GM10248 (cell line): ENCODE measurements at regions of chr4 and their contacts with region 1.

Region 1: DNA sequence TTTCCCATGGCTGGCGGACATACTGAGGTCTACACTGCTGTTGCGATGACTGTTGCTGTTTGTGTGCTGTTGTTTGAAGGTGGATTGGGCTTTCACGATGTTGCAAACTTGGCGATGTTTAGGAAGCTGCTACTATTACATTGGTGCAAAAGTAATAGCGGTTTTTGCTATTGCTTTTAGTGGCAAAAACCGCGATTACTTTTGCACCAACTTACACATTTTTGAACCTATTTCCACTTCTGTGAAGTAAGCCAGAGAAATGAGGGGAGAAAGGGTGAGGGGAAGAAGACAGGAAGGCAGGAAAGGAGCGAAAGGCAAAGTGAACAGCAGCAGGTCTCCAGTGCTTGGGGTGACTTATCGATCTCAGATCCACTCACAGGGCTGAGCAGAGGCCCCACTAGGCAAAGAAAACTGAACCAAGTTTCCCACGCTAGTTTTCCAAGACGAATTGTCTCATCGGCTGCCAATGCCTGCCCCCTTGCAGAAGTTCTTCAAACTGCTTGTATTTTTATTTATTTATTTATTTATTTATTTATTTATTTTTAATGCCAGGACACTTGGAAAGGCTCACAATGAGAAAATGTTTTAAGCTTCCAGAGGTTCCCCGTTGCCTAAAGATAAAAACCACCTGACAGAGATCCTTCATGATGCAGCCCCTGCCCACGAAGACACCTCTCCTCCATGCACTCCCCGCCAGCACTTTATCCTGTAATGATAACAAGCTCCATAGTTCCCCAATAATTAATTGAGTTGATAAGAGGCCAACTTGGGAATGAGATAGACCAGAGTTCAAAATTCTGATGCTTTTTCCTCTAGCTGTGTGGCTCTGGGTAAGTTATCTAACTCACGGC is 43.3 kb downstream of the QDPR start:
- DNase-seq: peak; percentile 29
- CTCF ChIP-seq: peak; percentile 1

Region 2: GRCh38 chr4:17480210-17480927 is 11.8 kb after region 1 on chr4:
- CTCF ChIA-PET with region 1: interaction called, 10 read pairs
- POLR2A ChIA-PET with region 1: no interaction called
- DNase-seq: no peak
- CTCF ChIP-seq: no peak